ENCODE measurements at regions of chr6 and their contacts with region 1.

Region 1: DNA sequence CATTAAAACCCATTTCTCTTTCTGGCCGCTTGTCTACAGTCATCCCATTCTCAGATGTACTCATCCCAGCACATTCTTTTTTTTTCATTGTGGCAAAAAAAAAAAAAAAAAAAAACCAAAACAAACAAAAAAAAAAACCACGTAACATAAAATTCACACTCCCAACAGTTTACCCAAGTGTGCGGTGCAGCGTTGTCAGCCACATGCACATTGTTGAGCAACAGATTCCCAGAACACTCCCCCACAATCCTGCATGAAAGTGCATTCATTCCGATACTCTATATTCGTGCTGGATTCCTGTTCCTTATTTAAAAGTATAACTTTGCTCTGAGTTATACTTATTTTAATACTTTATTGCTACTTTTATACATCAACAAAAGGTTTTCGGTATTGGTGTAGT is 96.0 kb downstream of the SASH1 start:
- DNase-seq: no peak
- ATAC-seq: no peak
- H3K4me3 ChIP-seq: no peak overlapping the region
- H3K27ac ChIP-seq: no peak overlapping the region
- H3K4me1 ChIP-seq: peaks cover 0 to 51% (median 27%) of the 10 kb centered on the region in 9 donors
- H3K27me3 ChIP-seq: no peaks in the 10 kb centered on the region
- CTCF ChIP-seq: no peak

Region 2: DNA sequence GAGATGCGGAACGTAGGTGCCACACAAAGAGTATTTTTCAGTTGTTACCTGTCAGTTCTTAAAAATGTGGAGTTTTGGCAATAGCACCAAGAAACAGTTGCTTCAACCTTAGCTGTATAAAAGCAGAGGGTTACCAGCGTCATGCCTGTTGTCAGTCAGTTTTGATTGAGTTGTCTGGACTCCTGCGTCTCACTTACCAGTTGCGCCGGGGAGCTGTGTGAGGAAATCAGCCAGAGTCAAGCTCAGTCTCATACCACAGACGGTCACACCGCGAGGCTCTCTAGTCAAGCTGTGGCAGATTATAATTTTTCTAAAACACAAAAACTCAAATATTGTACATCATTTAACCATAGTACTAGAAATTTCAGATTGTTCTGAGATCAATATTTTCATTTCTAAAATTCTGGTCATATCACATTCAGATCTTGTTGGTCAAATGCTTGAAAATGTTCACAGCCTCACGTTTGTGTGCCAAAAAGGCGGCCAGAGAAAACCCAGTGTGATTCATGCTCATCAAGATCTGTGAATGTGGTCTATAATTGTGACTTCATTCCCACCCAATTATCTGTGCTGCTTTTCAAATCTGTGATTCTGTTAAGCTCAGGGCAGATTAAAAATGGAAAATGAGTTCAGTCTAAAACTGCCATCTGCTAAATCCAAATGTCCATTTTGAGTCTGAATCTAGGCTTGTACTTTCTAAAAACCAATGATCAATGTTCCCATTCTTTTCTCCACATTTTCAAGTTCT is 58.5 kb before region 1 on chr6:
- intact Hi-C with region 1: no loop called
- DNase-seq: no peak
- ATAC-seq: peak in 1 of 8 donors; percentile 34
- H3K4me3 ChIP-seq: no peak overlapping the region
- H3K27ac ChIP-seq: peak overlapping the region in 7 of 10 donors; percentile 6 to 58 (median 32)
- H3K4me1 ChIP-seq: peaks cover 0 to 80% (median 51%) of the 10 kb centered on the region in 9 donors
- H3K27me3 ChIP-seq: no peaks in the 10 kb centered on the region
- CTCF ChIP-seq: no peak

Region 3: DNA sequence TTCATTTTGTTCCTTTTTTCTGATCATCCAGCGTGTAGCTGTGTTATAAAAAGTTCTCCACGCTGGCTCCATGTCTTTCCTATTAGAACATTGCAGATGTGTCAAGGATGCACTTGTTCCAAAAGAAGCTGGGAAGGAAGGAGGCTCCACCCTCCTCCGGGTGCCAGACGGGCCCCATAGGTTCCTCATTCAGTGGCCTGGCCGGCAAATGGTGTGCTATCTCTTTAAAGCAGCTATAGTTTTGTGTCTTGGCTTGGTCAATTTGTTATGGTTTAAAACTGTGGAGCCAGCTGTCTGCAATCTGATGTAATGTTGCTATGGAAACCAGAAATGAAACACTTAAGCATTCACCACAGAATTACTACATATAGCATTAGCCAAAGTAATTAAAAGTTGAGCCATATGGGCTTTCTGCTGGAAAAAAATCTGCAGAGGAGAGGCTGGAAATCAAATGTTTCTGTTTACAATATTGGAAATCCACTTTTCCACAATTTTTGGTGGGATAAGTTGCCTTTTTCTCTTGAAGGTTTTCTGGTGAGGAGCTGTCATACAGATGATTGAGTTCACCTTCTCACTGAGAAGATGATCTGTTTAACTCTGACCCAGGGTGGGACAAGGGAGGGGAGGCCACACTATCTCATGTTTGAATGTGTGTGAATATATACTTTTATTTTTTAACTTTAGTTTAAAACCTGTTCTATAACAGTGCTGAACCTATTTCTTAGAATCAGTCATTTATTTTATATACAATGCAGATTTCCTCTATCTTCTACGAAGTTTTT is 71.4 kb after region 1 on chr6:
- intact Hi-C with region 1: loop called in 1 of 10 experiments (anchors 2 kb)
- DNase-seq: peak; percentile 56 to 60
- ATAC-seq: peak in 7 of 8 donors; percentile 45 to 70 (median 54)
- H3K4me3 ChIP-seq: peak overlapping the region; percentile 27 to 59 (median 50)
- H3K27ac ChIP-seq: peak overlapping the region; percentile 67 to 88 (median 84)
- H3K4me1 ChIP-seq: peaks cover 0 to 73% (median 41%) of the 10 kb centered on the region in 9 donors
- H3K27me3 ChIP-seq: no peaks in the 10 kb centered on the region
- CTCF ChIP-seq: no peak